ENCODE measurements at regions of chr12 and their contacts with region 1.

Region 1: GRCh38 chr12:54294152-54294952 is 6.5 kb downstream of the NFE2 start:
- DNase-seq: no peak
- H3K4me3 ChIP-seq: no peak overlapping the region
- H3K27ac ChIP-seq: no peak overlapping the region
- H3K27me3 ChIP-seq: peaks cover 9% of the 10 kb centered on the region
- CTCF ChIP-seq: peak; percentile 88

Region 2: DNA sequence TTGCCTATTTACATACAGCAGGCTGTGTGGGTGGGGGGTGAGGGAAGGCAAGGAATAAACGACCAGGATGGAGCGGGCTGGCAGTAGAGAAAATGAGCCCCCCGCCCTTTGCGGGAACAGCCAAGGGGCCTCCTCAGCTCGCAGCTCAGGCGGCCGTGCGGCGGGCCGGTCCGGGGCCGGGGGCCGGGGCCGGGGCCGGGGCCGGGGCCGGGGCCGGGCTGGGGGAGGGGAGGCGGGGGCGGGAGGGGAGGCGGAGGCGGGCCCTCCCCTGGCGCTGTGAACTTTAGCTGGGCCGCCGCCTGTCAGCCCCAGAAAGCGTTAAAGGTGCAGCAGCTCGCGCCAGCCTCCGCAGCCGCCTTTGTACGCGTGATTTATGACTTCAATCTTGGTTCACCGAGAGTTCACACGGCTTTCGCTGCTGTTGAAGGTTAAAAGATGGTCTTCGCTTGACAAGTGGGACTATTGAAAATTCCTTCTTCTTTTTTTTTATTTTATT is 211.9 kb before region 1 on chr12:
- in situ Hi-C with region 1: no loop called
- DNase-seq: no peak
- H3K4me3 ChIP-seq: no peak overlapping the region
- H3K27ac ChIP-seq: no peak overlapping the region
- H3K27me3 ChIP-seq: peaks cover 15% of the 10 kb centered on the region
- CTCF ChIP-seq: no peak

Region 3: DNA sequence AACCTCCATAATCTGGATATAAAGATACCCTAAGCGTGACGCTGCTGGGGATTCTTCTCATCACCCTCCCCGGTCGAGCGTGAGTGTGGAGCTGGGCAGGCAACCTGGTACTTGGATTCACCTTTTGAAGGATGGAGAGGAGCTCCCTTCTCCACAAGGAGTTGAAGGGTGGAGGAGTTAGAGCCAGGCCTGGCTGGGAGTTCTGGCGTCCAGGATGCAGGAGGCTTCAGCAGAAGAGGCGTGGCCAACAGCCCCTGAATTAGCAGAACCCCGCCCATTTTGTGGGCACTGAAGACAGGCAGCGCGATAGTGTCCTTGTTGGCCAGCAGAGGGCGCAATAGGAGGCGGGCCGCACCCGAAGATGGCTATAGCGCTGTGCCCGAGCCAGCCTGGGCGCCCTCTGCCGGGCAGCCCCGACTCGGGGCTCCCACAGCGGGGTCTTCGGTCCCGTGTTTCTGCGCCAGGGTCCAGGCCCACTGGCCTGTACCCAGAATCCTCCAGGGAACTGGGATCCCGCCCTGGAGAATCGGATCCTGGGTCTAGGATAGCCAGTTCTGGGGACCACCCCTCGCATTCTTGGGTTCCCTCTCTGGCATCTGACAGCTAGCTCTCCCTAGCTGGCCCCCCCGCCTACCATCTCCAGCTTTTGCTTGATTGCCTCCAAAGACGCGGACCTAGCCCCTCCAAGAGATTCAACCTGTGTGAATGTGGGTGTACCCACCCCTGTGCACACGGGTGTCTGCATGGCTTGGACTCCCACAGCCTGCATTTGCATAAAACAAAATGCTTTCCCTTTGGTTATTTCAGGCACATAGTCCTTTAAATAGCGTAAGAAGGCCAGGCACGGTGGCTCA is 79.6 kb before region 1 on chr12:
- in situ Hi-C with region 1: no loop called
- DNase-seq: peak; percentile 71
- H3K4me3 ChIP-seq: peak overlapping the region; percentile 24
- H3K27ac ChIP-seq: no peak overlapping the region
- H3K27me3 ChIP-seq: no peaks in the 10 kb centered on the region
- CTCF ChIP-seq: peak; percentile 99

Region 4: GRCh38 chr12:54232790-54233189 is 61.6 kb before region 1 on chr12:
- in situ Hi-C with region 1: no loop called
- DNase-seq: peak; percentile 35
- H3K4me3 ChIP-seq: no peak overlapping the region
- H3K27ac ChIP-seq: no peak overlapping the region
- H3K27me3 ChIP-seq: no peaks in the 10 kb centered on the region
- CTCF ChIP-seq: peak; percentile 50

Region 5: GRCh38 chr12:54360717-54361456 is 66.5 kb after region 1 on chr12:
- in situ Hi-C with region 1: loop called (anchors 5 kb)
- DNase-seq: peak; percentile 75
- H3K4me3 ChIP-seq: no peak overlapping the region
- H3K27ac ChIP-seq: no peak overlapping the region
- H3K27me3 ChIP-seq: no peaks in the 10 kb centered on the region
- CTCF ChIP-seq: peak; percentile 91

Region 6: DNA sequence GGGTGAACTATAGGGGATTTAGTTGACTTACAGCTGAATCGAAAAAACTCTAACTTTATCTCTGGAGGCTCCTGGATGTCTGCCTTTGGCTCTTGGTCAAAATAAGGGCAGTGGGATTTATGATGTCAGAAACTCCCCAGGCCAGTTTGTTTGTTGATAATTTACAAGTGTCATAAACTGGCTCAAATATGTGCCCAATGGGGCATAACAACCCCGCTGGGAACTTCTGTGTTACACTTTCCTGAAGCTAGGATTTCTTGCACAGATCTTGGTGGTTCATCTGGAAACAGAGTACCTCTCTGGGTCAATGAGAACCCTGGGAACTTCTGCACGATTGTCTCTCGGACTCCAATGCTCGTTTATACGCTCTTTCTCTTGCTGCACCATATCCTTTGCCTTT is 501.3 kb after region 1 on chr12:
- in situ Hi-C with region 1: no loop called
- DNase-seq: no peak
- H3K4me3 ChIP-seq: no peak overlapping the region
- H3K27ac ChIP-seq: no peak overlapping the region
- H3K27me3 ChIP-seq: no peaks in the 10 kb centered on the region
- CTCF ChIP-seq: no peak

Measured in brain microvascular endothelial cell (primary cell).